ENCODE measurements at regions of chr1 and their contacts with region 1.

Region 1: DNA sequence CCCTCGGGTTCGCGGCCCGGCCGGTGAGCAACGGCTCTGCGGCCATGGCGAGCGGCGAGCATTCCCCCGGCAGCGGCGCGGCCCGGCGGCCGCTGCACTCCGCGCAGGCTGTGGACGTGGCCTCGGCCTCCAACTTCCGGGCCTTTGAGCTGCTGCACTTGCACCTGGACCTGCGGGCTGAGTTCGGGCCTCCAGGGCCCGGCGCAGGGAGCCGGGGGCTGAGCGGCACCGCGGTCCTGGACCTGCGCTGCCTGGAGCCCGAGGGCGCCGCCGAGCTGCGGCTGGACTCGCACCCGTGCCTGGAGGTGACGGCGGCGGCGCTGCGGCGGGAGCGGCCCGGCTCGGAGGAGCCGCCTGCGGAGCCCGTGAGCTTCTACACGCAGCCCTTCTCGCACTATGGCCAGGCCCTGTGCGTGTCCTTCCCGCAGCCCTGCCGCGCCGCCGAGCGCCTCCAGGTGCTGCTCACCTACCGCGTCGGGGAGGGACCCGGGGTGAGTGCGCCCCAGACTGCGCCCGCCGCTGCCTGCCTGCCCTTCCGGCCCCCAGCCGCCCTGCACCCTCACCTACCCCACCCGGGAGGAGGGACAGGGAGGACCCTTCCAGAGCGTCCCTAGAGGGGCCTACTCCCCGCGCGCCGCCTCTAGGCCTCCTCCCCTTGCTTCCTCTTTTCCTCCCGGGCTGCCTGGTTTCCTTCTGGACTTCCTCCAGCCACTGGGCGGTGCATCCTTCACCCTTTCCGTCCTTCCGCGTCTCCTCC is at the start of gene RNPEP:
- DNase-seq: peak; percentile 94
- H3K4me3 Mint-ChIP-seq: peak within 1 kb of the TSS; percentile 90
- H3K27ac Mint-ChIP-seq: peak within 1 kb of the TSS; percentile 66
- H3K4me1 Mint-ChIP-seq: peaks cover 24% of the 10 kb centered on the region
- H3K27me3 Mint-ChIP-seq: no peaks in the 10 kb centered on the region
- CTCF ChIP-seq: peak; percentile 30
- total RNA-seq, gene RNPEP: 147 and 155 TPM in 2 replicates

Region 2: GRCh38 chr1:201766131-201766866 is 216.5 kb before region 1 on chr1:
- CTCF ChIA-PET with region 1: no interaction called
- POLR2A ChIA-PET with region 1: no interaction called
- intact Hi-C with region 1: no loop called
- DNase-seq: peak; percentile 97
- H3K4me3 Mint-ChIP-seq: peak overlapping the region; percentile 1
- H3K27ac Mint-ChIP-seq: peak overlapping the region; percentile 5
- H3K4me1 Mint-ChIP-seq: peaks cover 49% of the 10 kb centered on the region
- H3K27me3 Mint-ChIP-seq: no peaks in the 10 kb centered on the region
- CTCF ChIP-seq: no peak

Region 3: DNA sequence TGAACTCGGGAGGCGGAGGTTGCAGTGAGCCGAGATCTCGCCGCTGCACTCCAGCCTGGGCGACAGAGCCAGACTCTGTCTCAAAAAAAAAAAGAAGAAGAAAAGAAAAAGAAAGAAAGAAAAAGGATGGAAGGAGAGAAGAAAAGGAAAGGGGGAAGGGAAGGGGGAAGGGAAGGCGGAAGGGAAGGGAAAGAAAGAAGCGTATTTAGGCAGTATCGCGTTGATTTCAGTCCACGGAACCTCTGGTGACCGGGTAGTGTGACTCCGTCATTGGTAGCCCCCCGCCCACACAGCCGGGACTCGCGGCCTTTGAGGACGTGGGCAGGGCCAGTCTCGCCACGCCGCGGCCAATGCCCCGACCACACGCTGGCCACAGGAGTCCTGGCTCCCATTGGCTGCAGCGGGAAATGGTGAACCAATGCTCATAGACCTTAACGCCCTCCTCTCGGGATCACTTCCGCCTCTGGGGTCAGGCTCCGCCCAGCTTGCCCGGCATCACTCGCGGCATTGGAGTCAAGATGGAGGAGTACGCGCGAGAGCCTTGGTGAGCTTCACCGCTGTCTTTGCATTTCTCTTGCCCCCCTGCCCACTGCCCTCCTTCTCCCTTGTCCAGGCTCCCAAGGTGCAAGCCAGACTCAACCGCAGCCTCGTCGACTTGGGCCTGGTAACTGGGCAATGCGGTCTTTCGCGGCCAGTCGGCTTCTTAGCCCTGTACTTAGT is 27.6 kb before region 1 on chr1 and contains the start of gene TIMM17A:
- CTCF ChIA-PET with region 1: interaction called, 5 read pairs
- POLR2A ChIA-PET with region 1: interaction called, 72 read pairs
- intact Hi-C with region 1: no loop called
- DNase-seq: peak; percentile 100
- H3K4me3 Mint-ChIP-seq: peak within 1 kb of the TSS; percentile 96
- H3K27ac Mint-ChIP-seq: peak within 1 kb of the TSS; percentile 99
- H3K4me1 Mint-ChIP-seq: peaks cover 12% of the 10 kb centered on the region
- H3K27me3 Mint-ChIP-seq: no peaks in the 10 kb centered on the region
- CTCF ChIP-seq: no peak
- total RNA-seq, gene TIMM17A: 157 and 171 TPM in 2 replicates

Region 4: DNA sequence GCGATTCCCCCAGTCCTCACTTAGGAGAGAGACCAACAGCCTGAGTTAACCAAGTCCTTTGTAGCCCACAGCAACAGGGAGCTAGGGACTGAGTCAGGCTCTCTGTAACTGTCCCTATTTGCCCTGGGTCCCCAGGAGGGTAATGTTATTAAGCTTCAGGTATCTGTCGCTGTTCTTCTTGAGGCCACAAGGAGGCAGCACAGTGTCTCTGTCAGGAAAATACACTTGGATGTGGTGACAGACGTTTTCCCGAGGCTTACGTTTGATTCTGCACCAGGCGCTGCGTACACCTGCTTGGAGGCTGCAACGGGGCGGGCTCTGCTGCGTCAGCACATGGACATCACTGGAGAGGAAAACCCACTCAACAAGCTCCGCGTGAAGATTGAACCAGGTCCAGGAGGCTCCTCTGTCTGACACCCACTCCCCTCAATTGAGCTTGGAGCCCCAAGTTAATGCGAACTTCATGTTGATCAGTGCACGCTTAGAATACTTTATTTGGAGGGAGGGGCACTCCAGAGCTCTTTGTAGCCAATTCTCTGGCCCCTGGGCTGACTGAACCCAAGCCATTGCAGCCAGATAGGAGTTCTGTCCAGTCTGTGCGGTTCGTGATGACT is 16.9 kb after region 1 on chr1:
- CTCF ChIA-PET with region 1: interaction called, 47 read pairs
- POLR2A ChIA-PET with region 1: interaction called, 36 read pairs
- intact Hi-C with region 1: no loop called
- DNase-seq: peak; percentile 81
- H3K4me3 Mint-ChIP-seq: no peak overlapping the region
- H3K27ac Mint-ChIP-seq: no peak overlapping the region
- H3K4me1 Mint-ChIP-seq: no peaks in the 10 kb centered on the region
- H3K27me3 Mint-ChIP-seq: no peaks in the 10 kb centered on the region
- CTCF ChIP-seq: peak; percentile 78

Region 5: DNA sequence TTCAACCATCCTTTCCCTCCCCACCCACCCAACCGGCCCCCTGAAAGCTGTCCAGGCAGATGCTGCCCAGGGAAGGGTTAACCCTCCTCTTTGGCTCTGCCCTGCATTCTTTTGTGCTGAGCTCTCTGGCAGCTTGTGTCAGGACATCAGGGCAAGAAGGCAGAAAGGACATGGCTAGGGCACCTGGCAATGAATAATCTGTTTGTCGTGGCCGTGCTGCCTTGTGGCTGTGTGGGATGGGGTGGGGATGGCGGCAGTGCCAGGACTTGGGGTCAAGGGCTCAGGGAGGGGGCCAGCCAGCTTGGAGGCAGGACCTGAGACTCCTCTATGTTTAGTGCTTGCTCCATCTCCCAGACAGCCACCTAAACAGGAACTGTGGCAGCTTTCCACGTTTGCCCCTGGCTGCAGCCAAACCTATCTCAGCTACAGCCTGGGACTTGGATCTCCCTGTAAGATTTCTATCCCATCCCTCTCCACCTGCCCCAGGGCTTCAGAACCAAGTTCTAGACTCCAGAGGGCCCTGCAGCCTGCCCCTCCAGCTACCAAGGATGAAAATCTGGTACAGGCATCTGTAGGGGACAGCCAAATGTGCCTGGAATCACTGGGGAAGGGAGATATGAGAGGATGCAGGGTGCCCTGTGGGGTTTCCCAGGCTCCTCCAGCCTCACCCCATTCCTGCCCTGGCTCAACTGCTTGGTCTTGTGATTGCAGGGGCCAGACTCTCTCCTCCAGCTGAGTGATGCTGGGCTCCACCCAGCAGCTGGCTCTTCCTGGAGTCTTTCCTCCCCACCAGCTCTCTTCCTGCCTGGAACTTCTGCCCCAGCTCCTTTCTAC is 130.3 kb after region 1 on chr1:
- CTCF ChIA-PET with region 1: interaction called, 71 read pairs
- POLR2A ChIA-PET with region 1: interaction called, 5 read pairs
- intact Hi-C with region 1: no loop called
- DNase-seq: peak; percentile 27
- H3K4me3 Mint-ChIP-seq: no peak overlapping the region
- H3K27ac Mint-ChIP-seq: no peak overlapping the region
- H3K4me1 Mint-ChIP-seq: peaks cover 31% of the 10 kb centered on the region
- H3K27me3 Mint-ChIP-seq: no peaks in the 10 kb centered on the region
- CTCF ChIP-seq: no peak

Measured in MCF 10A (cell line).